Esophagus squamous epithelium (tissue), 5 donors: ENCODE measurements at regions of chr15 and their contacts with region 1.

Region 1: GRCh38 chr15:25933456-25934158 is 70.5 kb upstream of the ATP10A start:
- DNase-seq: no peak
- H3K4me3 ChIP-seq: peak overlapping the region in 2 of 4 donors; percentile 29 to 61
- H3K27ac ChIP-seq: no peak overlapping the region
- H3K4me1 ChIP-seq: peaks cover 0 to 5% (median 4%) of the 10 kb centered on the region in 3 donors
- H3K27me3 ChIP-seq: peaks cover 0 to 8% (median 0%) of the 10 kb centered on the region in 4 donors
- CTCF ChIP-seq: peak in 5 of 6 experiments; percentile 52 to 78 (median 56)
- POLR2A ChIP-seq: no peak

Region 2: DNA sequence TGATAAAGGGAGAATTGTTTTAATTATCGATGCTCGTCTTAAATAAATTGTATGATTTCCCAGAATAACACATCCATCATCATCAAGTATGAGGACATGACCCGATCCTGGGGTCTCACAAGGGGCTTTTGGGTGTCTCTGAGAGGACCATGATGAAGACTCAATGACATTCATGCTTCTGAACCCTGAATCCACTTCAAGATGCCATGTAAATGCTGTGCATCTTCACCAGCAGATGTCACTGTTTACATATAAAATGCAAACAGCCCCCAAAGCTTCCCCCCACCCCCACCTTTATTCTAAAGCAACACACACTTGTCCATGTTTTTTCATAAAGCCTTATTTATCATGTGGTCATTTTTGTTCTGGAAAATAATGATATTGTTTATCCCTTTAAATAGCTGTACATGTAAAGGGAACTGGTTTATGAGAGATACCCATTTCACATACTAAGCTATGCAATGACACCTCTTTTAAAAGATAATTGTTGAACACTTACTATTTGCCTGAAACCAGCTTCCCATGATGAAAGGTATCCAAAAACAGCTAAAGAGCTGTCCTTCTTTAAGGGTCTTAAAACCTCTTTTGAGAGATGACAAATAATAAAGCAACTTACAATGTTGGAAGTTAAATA is 425.1 kb before region 1 on chr15:
- intact Hi-C with region 1: loop called (anchors 10 kb)
- DNase-seq: no peak
- H3K4me3 ChIP-seq: no peak overlapping the region
- H3K27ac ChIP-seq: no peak overlapping the region
- H3K4me1 ChIP-seq: no peaks in the 10 kb centered on the region
- H3K27me3 ChIP-seq: no peaks in the 10 kb centered on the region
- CTCF ChIP-seq: peak in 5 of 6 experiments; percentile 40 to 69 (median 61)
- POLR2A ChIP-seq: no peak

Region 3: GRCh38 chr15:25693321-25694237 is 240.0 kb before region 1 on chr15:
- intact Hi-C with region 1: loop called (anchors 10 kb)
- DNase-seq: no peak
- H3K4me3 ChIP-seq: no peak overlapping the region
- H3K27ac ChIP-seq: no peak overlapping the region
- H3K4me1 ChIP-seq: peaks cover 0 to 12% (median 3%) of the 10 kb centered on the region in 3 donors
- H3K27me3 ChIP-seq: no peaks in the 10 kb centered on the region
- CTCF ChIP-seq: peak in 5 of 6 experiments; percentile 30 to 50 (median 42)
- POLR2A ChIP-seq: no peak